ENCODE measurements at regions of chr1 and their contacts with region 1.

Region 1: GRCh38 chr1:198007687-198008607 is 90.8 kb downstream of the LHX9 start:
- DNase-seq: no peak
- ATAC-seq: no peak
- H3K4me3 ChIP-seq: no peak overlapping the region
- H3K27ac ChIP-seq: no peak overlapping the region
- H3K4me1 ChIP-seq: no peaks in the 10 kb centered on the region
- H3K27me3 ChIP-seq: no peaks in the 10 kb centered on the region
- CTCF ChIP-seq: no peak
- EP300 ChIP-seq: no peak
- POLR2A ChIP-seq: no peak
- RAD21 ChIP-seq: no peak

Region 2: GRCh38 chr1:198024782-198025181 is 16.8 kb after region 1 on chr1:
- CTCF ChIA-PET with region 1: no interaction called
- POLR2A ChIA-PET with region 1: interaction called, 13 read pairs
- RAD21 ChIA-PET with region 1: no interaction called
- SMC1A ChIA-PET with region 1: no interaction called
- in situ Hi-C with region 1: no loop called
- intact Hi-C with region 1: no loop called
- DNase-seq: no peak
- ATAC-seq: no peak
- H3K4me3 ChIP-seq: no peak overlapping the region
- H3K27ac ChIP-seq: no peak overlapping the region
- H3K4me1 ChIP-seq: no peaks in the 10 kb centered on the region
- H3K27me3 ChIP-seq: no peaks in the 10 kb centered on the region
- CTCF ChIP-seq: no peak
- EP300 ChIP-seq: no peak
- POLR2A ChIP-seq: no peak
- RAD21 ChIP-seq: no peak

Region 3: GRCh38 chr1:198056255-198056654 is 48.3 kb after region 1 on chr1:
- CTCF ChIA-PET with region 1: no interaction called
- POLR2A ChIA-PET with region 1: no interaction called
- RAD21 ChIA-PET with region 1: no interaction called
- SMC1A ChIA-PET with region 1: no interaction called
- in situ Hi-C with region 1: no loop called
- intact Hi-C with region 1: no loop called
- DNase-seq: no peak
- ATAC-seq: peak; percentile 85
- H3K4me3 ChIP-seq: no peak overlapping the region
- H3K27ac ChIP-seq: no peak overlapping the region
- H3K4me1 ChIP-seq: no peaks in the 10 kb centered on the region
- H3K27me3 ChIP-seq: no peaks in the 10 kb centered on the region
- CTCF ChIP-seq: peak; percentile 18 to 42 (median 34); a peak in 4 of 6 replicates
- EP300 ChIP-seq: no peak
- POLR2A ChIP-seq: no peak
- RAD21 ChIP-seq: 0 out of 2 replicates have a peak, but pooled peaks have one; percentile 24